H1 (cell line): ENCODE measurements at regions of chr11 and their contacts with region 1.

Region 1: DNA sequence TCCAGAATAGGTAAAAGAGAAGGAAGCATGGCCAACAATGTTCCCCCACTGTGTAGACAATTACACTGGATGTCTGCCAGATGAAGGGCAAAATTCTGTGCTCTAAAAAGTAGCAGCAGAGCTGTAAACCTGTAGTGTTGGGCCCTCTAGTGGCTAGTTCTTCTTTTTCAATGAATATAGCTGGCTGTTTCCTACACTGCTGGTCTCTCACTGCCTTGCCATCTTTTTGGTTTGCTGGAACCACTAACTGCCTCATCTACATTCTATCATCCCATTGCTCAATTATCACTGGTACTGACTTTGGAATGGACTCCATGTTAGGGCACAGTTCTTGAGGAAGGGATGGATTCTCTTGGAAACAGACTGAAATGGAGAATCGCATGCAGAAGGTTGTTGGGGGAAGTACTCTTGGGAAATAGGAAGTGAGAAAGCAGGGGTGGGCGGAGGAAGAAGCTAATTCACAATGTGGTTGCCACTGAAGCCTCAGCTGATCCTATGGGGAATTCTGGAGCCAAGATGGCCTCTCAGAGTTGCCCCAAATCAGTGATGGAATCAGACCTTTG is 17.9 kb downstream of the KCNE3 start:
- DNase-seq: no peak
- H3K4me3 ChIP-seq: no peak overlapping the region
- H3K27ac ChIP-seq: no peak overlapping the region
- H3K4me1 ChIP-seq: peaks cover 0 to 2% (median 1%) of the 10 kb centered on the region in 4 experiments; a peak in 2 of 7 replicates
- H3K27me3 ChIP-seq: no peaks in the 10 kb centered on the region
- CTCF ChIP-seq: peak in 2 of 3 experiments; percentile 79 to 81; a peak in 3 of 4 replicates
- EP300 ChIP-seq: no peak
- POLR2A ChIP-seq: no peak
- RAD21 ChIP-seq: peak; percentile 88 to 91

Region 2: GRCh38 chr11:74255741-74256369 is 193.6 kb before region 1 on chr11:
- CTCF ChIA-PET with region 1: interaction called, 53 read pairs
- POLR2A ChIA-PET with region 1: no interaction called
- DNase-seq: peak; percentile 17 to 54
- H3K4me3 ChIP-seq: no peak overlapping the region
- H3K27ac ChIP-seq: no peak overlapping the region
- H3K4me1 ChIP-seq: no peaks in the 10 kb centered on the region
- H3K27me3 ChIP-seq: no peaks in the 10 kb centered on the region
- CTCF ChIP-seq: peak; percentile 70 to 87 (median 83)
- EP300 ChIP-seq: no peak
- POLR2A ChIP-seq: no peak
- RAD21 ChIP-seq: peak; percentile 88 to 90

Region 3: DNA sequence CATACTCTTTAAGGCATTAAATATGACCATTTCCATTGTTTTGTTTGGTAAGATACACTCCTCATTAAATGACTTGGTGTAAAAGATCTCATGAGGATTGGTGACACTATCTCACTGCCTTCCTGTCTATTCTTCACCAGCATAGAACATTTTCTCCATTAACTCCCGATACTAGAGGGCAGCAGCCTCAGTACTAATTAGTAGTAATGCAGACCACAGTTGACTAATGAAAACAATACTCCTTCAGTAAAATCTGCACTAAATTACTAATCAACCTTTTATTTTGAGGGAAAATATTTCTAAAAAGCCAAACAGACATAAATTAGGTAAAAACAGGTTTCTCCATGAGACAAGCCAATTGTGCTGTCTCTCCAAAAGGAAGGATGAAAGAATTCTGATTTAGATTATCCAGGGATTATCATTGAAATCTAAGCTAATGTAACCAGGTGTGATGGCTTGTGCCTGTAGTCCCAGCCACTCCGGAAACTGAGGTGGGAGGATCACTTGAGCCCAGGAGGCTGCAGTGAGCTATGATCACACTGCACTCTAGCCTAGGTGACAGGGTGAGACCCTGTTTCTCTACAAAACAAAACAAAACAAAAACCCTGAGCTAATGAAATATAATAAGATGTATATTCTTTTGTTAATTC is 60.6 kb before region 1 on chr11:
- CTCF ChIA-PET with region 1: interaction called, 24 read pairs
- POLR2A ChIA-PET with region 1: no interaction called
- DNase-seq: peak in 1 of 2 experiments; percentile 61
- H3K4me3 ChIP-seq: no peak overlapping the region
- H3K27ac ChIP-seq: no peak overlapping the region
- H3K4me1 ChIP-seq: peaks cover 0 to 3% (median 2%) of the 10 kb centered on the region in 4 experiments; a peak in 3 of 7 replicates
- H3K27me3 ChIP-seq: no peaks in the 10 kb centered on the region
- CTCF ChIP-seq: peak in 2 of 3 experiments; percentile 50 to 72; a peak in 2 of 4 replicates
- EP300 ChIP-seq: no peak
- POLR2A ChIP-seq: no peak
- RAD21 ChIP-seq: peak; percentile 53 to 55

Region 4: DNA sequence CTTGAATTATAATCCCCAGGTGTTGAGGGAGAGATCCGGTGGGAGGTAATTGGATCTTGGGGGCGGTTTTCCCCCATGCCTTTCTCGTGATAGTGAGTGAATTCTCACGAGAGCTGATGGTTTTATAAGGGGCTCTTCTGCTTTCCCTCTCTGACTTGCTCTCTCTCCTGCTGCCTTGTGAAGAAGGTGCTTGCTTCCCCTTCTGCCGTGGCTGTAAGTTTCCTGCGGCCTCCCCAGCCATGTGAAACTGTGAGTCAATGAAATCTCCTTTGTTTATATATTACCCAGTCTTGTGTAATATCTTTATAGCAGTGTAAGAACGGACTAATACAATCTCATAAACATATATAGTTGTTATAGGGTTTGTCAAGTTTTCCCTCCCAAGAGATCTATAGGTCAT is 14.9 kb before region 1 on chr11:
- CTCF ChIA-PET with region 1: interaction called, 63 read pairs
- POLR2A ChIA-PET with region 1: no interaction called
- DNase-seq: no peak
- H3K4me3 ChIP-seq: no peak overlapping the region
- H3K27ac ChIP-seq: no peak overlapping the region
- H3K4me1 ChIP-seq: no peaks in the 10 kb centered on the region
- H3K27me3 ChIP-seq: peaks cover 0 to 2% (median 0%) of the 10 kb centered on the region in 4 experiments; a peak in 1 of 7 replicates
- CTCF ChIP-seq: no peak
- EP300 ChIP-seq: no peak
- POLR2A ChIP-seq: no peak
- RAD21 ChIP-seq: no peak

Region 5: DNA sequence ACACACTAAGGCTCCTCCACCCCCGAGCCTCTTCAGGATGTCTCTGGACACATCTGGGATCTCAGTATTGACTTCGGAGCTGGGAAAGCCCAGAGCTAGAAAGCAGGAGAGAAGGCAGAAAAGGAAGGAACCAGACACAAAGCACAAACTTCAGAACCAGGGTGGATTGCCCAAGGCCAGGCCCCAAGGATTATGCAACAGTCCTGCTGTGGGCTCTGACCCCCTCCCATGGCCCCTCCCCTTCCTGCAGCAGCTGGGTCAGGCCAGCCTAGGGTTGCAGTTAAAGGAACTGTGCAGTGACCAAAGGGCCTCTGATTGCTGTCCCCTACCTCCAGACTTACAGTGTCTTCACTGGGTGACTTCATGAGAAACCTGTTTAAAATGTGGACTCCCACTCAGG is 12.6 kb after region 1 on chr11:
- CTCF ChIA-PET with region 1: interaction called, 42 read pairs
- POLR2A ChIA-PET with region 1: interaction called, 3 read pairs
- DNase-seq: no peak
- H3K4me3 ChIP-seq: no peak overlapping the region
- H3K27ac ChIP-seq: peak overlapping the region; percentile 10; the same call in 1 of the 2 replicates
- H3K4me1 ChIP-seq: peaks cover 0 to 8% (median 4%) of the 10 kb centered on the region in 4 experiments; a peak in 5 of 7 replicates
- H3K27me3 ChIP-seq: peaks cover 0 to 4% (median 0%) of the 10 kb centered on the region in 4 experiments; a peak in 3 of 7 replicates
- CTCF ChIP-seq: no peak
- EP300 ChIP-seq: no peak
- POLR2A ChIP-seq: no peak
- RAD21 ChIP-seq: no peak

Region 6: GRCh38 chr11:74492974-74493790 is 43.7 kb after region 1 on chr11 and contains the start of gene LIPT2:
- CTCF ChIA-PET with region 1: interaction called, 13 read pairs
- POLR2A ChIA-PET with region 1: interaction called, 6 read pairs
- DNase-seq: peak; percentile 94 to 96
- H3K4me3 ChIP-seq: peak within 1 kb of the TSS; percentile 61 to 81 (median 74)
- H3K27ac ChIP-seq: peak within 1 kb of the TSS; percentile 91
- H3K4me1 ChIP-seq: peaks cover 0 to 7% (median 4%) of the 10 kb centered on the region in 4 experiments; a peak in 4 of 7 replicates
- H3K27me3 ChIP-seq: no peaks in the 10 kb centered on the region
- CTCF ChIP-seq: no peak
- EP300 ChIP-seq: no peak
- POLR2A ChIP-seq: peak; percentile 87 to 91
- RAD21 ChIP-seq: no peak
- total RNA-seq, gene LIPT2: 6.4 and 7.7 TPM in 2 replicates

Region 7: DNA sequence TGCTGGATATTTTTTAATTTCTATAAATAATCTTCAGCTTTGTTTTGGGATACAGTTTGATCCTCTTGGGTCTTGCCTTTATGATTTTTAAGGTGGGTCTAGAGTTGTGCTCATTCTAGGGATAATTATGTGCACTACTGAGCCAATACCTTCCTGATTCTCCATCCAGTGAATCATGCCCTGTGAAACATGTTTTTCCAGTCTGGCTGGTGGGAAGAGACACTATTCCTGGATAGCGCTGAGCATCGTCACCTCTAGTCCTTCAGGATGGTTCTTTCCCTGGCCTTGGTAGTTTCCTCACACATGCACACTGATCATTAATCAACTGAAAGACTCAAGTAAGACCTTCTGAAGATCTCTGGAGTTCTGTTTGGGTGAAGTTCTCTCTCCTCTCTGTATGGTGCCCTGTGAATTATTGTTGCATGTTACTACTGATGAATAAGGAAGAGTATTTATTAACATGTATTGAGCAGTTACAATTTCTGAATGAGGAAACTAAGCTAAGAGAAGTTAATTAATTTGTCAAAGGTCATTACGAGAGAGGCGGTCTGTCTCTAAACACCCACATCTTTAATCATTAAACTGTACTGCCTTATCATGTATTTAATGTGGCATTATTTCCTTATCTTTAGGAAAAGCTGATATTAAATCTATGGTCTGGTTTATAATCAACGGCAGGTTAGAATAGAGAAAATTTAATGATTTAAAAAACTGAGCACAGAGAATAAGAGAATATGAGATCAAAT is 83.2 kb after region 1 on chr11:
- CTCF ChIA-PET with region 1: no interaction called
- POLR2A ChIA-PET with region 1: no interaction called
- DNase-seq: no peak
- H3K4me3 ChIP-seq: no peak overlapping the region
- H3K27ac ChIP-seq: no peak overlapping the region
- H3K4me1 ChIP-seq: no peaks in the 10 kb centered on the region
- H3K27me3 ChIP-seq: no peaks in the 10 kb centered on the region
- CTCF ChIP-seq: no peak
- EP300 ChIP-seq: no peak
- POLR2A ChIP-seq: no peak
- RAD21 ChIP-seq: no peak